ENCODE measurements at regions of chr10 and their contacts with region 1.

Region 1: GRCh38 chr10:77756319-77757232 is 119.0 kb upstream of the KCNMA1 start:
- DNase-seq: peak; percentile 66 to 68
- ATAC-seq: peak; percentile 96 to 98
- H3K4me3 ChIP-seq: no peak overlapping the region
- H3K27ac ChIP-seq: no peak overlapping the region
- H3K4me1 ChIP-seq: peaks cover 3% of the 10 kb centered on the region; the same call in 1 of the 3 replicates
- CTCF ChIP-seq: peak; percentile 77
- EP300 ChIP-seq: no peak
- POLR2A ChIP-seq: no peak
- RAD21 ChIP-seq: peak; percentile 79 to 91

Region 2: GRCh38 chr10:77474386-77474785 is 282.2 kb before region 1 on chr10:
- CTCF ChIA-PET with region 1: no interaction called
- POLR2A ChIA-PET with region 1: no interaction called
- DNase-seq: no peak
- ATAC-seq: no peak
- H3K4me3 ChIP-seq: no peak overlapping the region
- H3K27ac ChIP-seq: no peak overlapping the region
- H3K4me1 ChIP-seq: peaks cover 12% of the 10 kb centered on the region
- CTCF ChIP-seq: no peak
- EP300 ChIP-seq: no peak
- POLR2A ChIP-seq: no peak
- RAD21 ChIP-seq: no peak

Region 3: GRCh38 chr10:77770081-77770867 is 13.7 kb after region 1 on chr10:
- CTCF ChIA-PET with region 1: interaction called, 11 read pairs
- POLR2A ChIA-PET with region 1: no interaction called
- DNase-seq: no peak
- ATAC-seq: no peak
- H3K4me3 ChIP-seq: no peak overlapping the region
- H3K27ac ChIP-seq: no peak overlapping the region
- H3K4me1 ChIP-seq: no peaks in the 10 kb centered on the region
- CTCF ChIP-seq: no peak
- EP300 ChIP-seq: no peak
- POLR2A ChIP-seq: no peak
- RAD21 ChIP-seq: no peak

Region 4: DNA sequence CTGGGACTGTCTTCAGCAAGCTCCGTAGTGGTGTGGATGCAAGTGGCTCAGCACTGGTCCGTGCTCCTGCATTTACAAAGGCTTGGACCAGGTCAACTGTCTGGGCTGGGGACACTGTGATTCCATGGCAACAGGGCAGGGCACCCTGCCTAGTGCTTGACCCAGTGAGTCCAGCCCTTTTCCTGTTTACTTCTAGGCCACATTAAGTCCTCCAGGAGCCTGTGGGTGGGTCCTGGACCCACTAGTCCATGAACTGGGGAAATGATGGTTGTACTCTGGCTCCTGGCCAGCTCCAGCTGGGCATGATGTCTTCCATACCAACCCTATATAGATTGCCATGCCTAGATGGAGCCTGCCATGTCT is 429.1 kb after region 1 on chr10:
- CTCF ChIA-PET with region 1: no interaction called
- POLR2A ChIA-PET with region 1: no interaction called
- DNase-seq: no peak
- ATAC-seq: no peak
- H3K4me3 ChIP-seq: no peak overlapping the region
- H3K27ac ChIP-seq: no peak overlapping the region
- H3K4me1 ChIP-seq: no peaks in the 10 kb centered on the region
- CTCF ChIP-seq: no peak
- EP300 ChIP-seq: no peak
- POLR2A ChIP-seq: no peak
- RAD21 ChIP-seq: no peak